Natural killer cell (primary cell): ENCODE measurements at regions of chr2 and their contacts with region 1.

Region 1: DNA sequence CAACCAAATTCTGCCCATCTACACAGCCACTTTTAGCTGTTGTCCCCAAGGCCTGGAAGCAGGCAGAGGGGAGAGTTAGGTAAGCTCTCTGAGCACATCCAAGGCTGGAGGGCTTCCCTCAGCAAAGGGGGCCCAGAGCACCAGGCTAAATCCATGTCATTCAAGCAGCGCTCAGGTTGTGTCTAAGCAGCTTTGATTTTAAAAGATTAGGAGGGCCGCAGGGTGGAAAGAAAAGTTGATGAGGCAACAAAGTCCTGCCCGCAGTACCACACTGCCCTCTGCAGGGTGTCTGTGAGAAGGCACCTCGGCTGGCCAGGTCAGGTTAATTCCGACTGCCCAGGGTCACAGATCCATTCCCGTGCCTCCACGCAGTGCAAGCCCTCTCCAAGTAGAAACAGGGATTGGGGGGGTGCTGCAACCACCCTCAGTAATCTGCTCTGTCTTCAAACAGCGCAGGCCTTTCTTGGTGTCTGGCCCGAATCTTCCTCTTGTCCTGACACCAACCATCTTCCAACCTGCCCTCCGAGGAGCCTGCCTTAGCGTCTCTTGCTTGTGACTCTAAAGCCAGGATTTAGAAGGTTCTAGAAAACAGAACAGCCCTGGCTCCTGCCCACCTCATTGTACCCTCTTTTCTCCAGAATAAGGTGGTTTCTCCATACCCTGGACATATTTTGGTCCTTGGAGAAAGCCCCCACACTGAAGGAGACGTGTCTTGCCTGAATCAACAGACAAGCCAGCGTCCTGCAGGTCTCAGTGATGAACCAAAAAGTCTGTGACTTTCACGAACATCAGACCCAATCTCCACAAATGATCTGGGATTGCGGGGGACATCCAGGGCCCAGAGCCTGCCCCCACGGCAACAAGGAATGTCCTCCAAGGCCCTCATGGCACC is 289.2 kb downstream of the TNS1 start:
- DNase-seq: peak; percentile 60 to 77
- ATAC-seq: peak; percentile 75 to 95 (median 84)
- H3K4me3 ChIP-seq: no peak overlapping the region
- H3K4me3 Mint-ChIP-seq: no peak overlapping the region
- H3K27ac ChIP-seq: no peak overlapping the region
- H3K27ac Mint-ChIP-seq: no peak overlapping the region
- H3K4me1 ChIP-seq: no peaks in the 10 kb centered on the region
- H3K4me1 Mint-ChIP-seq: peaks cover 0 to 5% of the 10 kb centered on the region in 2 donors
- H3K27me3 ChIP-seq: peaks cover 3% of the 10 kb centered on the region
- H3K27me3 Mint-ChIP-seq: peaks cover 9 to 11% of the 10 kb centered on the region in 2 donors
- CTCF ChIP-seq: peak; percentile 92

Region 2: GRCh38 chr2:216519154-216519762 is 1194.4 kb before region 1 on chr2:
- intact Hi-C with region 1: loop called (anchors 5 kb)
- DNase-seq: peak; percentile 29 to 77
- ATAC-seq: peak; percentile 72 to 84 (median 83)
- H3K4me3 ChIP-seq: no peak overlapping the region
- H3K4me3 Mint-ChIP-seq: no peak overlapping the region
- H3K27ac ChIP-seq: no peak overlapping the region
- H3K27ac Mint-ChIP-seq: no peak overlapping the region
- H3K4me1 ChIP-seq: no peaks in the 10 kb centered on the region
- H3K4me1 Mint-ChIP-seq: peaks cover 6 to 7% of the 10 kb centered on the region in 2 donors
- H3K27me3 ChIP-seq: no peaks in the 10 kb centered on the region
- H3K27me3 Mint-ChIP-seq: no peaks in the 10 kb centered on the region
- CTCF ChIP-seq: peak; percentile 89

Region 3: GRCh38 chr2:216681683-216682082 is 1032.0 kb before region 1 on chr2:
- intact Hi-C with region 1: loop called (anchors 1 kb)
- DNase-seq: no peak
- ATAC-seq: no peak
- H3K4me3 ChIP-seq: no peak overlapping the region
- H3K4me3 Mint-ChIP-seq: no peak overlapping the region
- H3K27ac ChIP-seq: no peak overlapping the region
- H3K27ac Mint-ChIP-seq: no peak overlapping the region
- H3K4me1 ChIP-seq: no peaks in the 10 kb centered on the region
- H3K4me1 Mint-ChIP-seq: peaks cover 6% of the 10 kb centered on the region in 2 donors
- H3K27me3 ChIP-seq: no peaks in the 10 kb centered on the region
- H3K27me3 Mint-ChIP-seq: peaks cover 32 to 40% of the 10 kb centered on the region in 2 donors
- CTCF ChIP-seq: no peak

Region 4: DNA sequence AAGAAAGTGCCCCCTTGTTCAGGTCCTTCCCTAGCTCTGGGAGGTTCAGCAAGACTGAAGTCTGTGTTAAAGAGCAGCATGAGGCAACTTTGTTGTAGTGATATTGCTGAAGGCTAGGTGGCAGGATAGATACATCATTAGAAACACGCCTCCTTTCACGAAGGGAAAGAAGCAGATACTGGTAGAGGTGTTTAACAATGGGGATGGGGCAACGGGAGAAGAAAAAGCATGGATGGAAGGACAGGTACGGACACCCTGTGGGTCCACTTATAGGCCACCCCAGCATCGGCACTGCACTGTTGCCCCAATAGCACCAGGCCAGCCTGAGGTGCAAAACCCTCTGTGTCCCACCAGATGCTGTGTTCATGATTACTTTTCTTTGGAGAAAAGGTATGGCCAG is 1014.7 kb before region 1 on chr2:
- intact Hi-C with region 1: loop called (anchors 1 kb)
- DNase-seq: peak in 1 of 2 donors; percentile 58
- ATAC-seq: peak; percentile 43 to 80 (median 44)
- H3K4me3 ChIP-seq: no peak overlapping the region
- H3K4me3 Mint-ChIP-seq: no peak overlapping the region
- H3K27ac ChIP-seq: no peak overlapping the region
- H3K27ac Mint-ChIP-seq: no peak overlapping the region
- H3K4me1 ChIP-seq: peaks cover 9% of the 10 kb centered on the region
- H3K4me1 Mint-ChIP-seq: peaks cover 5 to 11% of the 10 kb centered on the region in 2 donors
- H3K27me3 ChIP-seq: peaks cover 25% of the 10 kb centered on the region
- H3K27me3 Mint-ChIP-seq: peaks cover 10 to 40% of the 10 kb centered on the region in 2 donors
- CTCF ChIP-seq: peak; percentile 51

Region 5: GRCh38 chr2:217650716-217651360 is 62.8 kb before region 1 on chr2:
- intact Hi-C with region 1: loop called (anchors 2 kb)
- DNase-seq: peak in 1 of 2 donors; percentile 50
- ATAC-seq: peak in 2 of 3 donors; percentile 45 to 68
- H3K4me3 ChIP-seq: no peak overlapping the region
- H3K4me3 Mint-ChIP-seq: no peak overlapping the region
- H3K27ac ChIP-seq: no peak overlapping the region
- H3K27ac Mint-ChIP-seq: no peak overlapping the region
- H3K4me1 ChIP-seq: no peaks in the 10 kb centered on the region
- H3K4me1 Mint-ChIP-seq: peaks cover 0 to 4% of the 10 kb centered on the region in 2 donors
- H3K27me3 ChIP-seq: no peaks in the 10 kb centered on the region
- H3K27me3 Mint-ChIP-seq: peaks cover 0 to 5% of the 10 kb centered on the region in 2 donors
- CTCF ChIP-seq: peak; percentile 47

Region 6: DNA sequence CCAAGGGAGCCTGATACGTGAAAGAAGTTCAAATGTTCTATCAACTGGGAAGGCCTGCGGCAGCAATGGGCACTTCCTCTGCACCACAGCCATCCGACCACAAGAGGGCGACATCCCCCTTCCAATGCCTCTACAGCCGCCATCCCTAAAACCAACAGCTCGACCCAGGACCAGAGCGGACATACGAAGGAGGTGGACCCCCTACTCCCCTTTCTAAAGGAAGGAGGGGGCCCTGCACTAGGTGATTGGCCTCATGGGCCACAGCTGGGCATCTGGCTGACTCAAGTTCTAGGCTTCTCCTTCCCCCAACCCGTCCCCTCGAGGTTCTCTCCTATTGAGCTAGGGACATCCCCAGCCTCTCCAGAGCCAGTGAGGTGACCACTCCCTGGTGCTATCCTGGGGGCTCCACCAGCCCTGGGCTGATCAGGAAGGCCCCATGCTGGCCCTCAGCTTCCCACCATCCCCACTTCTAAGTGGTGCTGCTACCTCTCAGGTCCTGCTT is 72.0 kb after region 1 on chr2:
- intact Hi-C with region 1: no loop called
- DNase-seq: peak; percentile 73 to 83
- ATAC-seq: peak; percentile 56 to 76 (median 73)
- H3K4me3 ChIP-seq: no peak overlapping the region
- H3K4me3 Mint-ChIP-seq: no peak overlapping the region
- H3K27ac ChIP-seq: no peak overlapping the region
- H3K27ac Mint-ChIP-seq: peak overlapping the region in 1 of 2 donors; percentile 57
- H3K4me1 ChIP-seq: peaks cover 21% of the 10 kb centered on the region
- H3K4me1 Mint-ChIP-seq: peaks cover 14 to 30% of the 10 kb centered on the region in 2 donors
- H3K27me3 ChIP-seq: no peaks in the 10 kb centered on the region
- H3K27me3 Mint-ChIP-seq: no peaks in the 10 kb centered on the region
- CTCF ChIP-seq: peak; percentile 93